IMR-90 (cell line): ENCODE measurements at regions of chr2 and their contacts with region 1.

Region 1: DNA sequence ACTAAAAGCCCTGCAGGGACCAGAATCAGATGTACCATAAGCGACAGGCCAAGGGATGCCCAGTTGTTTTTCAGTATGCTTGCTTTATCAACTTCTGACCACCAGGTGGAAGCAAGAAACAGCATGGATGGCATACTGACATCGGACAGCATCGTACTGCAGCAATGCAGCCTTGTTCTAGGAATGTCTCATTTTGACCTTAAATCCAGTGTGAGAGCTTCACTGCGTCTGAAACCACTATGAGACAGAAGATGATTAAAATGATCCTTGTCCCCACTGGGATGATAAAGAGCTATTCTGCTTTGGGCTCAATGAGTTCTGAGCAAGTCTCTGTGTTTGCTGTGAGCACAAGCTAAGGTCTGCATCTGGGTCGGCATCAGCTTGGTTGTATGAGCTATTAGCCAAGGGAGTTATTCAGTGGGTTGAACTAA is 54.3 kb downstream of the CDK15 start:
- DNase-seq: peak; percentile 93
- ATAC-seq: peak; percentile 83
- H3K4me3 ChIP-seq: no peak overlapping the region
- H3K27ac ChIP-seq: peak overlapping the region; percentile 68; the same call in 1 of the 2 replicates
- H3K4me1 ChIP-seq: peaks cover 26% of the 10 kb centered on the region
- H3K27me3 ChIP-seq: no peaks in the 10 kb centered on the region
- CTCF ChIP-seq: peak; percentile 80
- POLR2A ChIP-seq: 0 out of 2 replicates have a peak, but pooled peaks have one; percentile 43
- RAD21 ChIP-seq: peak; percentile 98

Region 2: DNA sequence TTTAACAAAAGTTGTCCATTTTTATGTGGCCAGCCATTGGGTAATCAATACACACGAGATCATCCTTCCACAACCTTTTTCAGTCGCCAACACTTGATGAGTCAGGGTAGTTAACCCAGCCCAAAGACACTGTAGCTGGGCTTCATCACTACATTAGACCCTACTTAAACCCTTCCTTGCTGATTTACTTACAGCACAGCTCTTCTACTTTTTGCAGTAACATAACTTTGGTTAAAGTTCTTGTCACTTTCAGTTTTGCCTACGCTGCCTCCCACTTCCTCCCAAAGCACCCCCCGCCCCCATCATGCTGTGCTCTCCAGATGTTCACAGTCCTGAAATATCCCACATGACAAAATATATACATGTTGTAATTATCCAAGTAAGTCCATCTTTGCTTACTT is 49.3 kb after region 1 on chr2:
- CTCF ChIA-PET with region 1: interaction called, 9 read pairs
- POLR2A ChIA-PET with region 1: interaction called, 3 read pairs
- dilution Hi-C with region 1: no loop called
- in situ Hi-C with region 1: no loop called
- intact Hi-C with region 1: loop called (anchors 2 kb)
- DNase-seq: peak; percentile 80
- ATAC-seq: peak; percentile 53
- H3K4me3 ChIP-seq: peak overlapping the region; percentile 42
- H3K27ac ChIP-seq: peak overlapping the region; percentile 76
- H3K4me1 ChIP-seq: peaks cover 11% of the 10 kb centered on the region
- H3K27me3 ChIP-seq: no peaks in the 10 kb centered on the region
- CTCF ChIP-seq: no peak
- POLR2A ChIP-seq: no peak
- RAD21 ChIP-seq: no peak

Region 3: GRCh38 chr2:202265467-202266277 is 405.0 kb after region 1 on chr2 and contains the start of gene NOP58:
- CTCF ChIA-PET with region 1: no interaction called
- POLR2A ChIA-PET with region 1: no interaction called
- dilution Hi-C with region 1: no loop called
- in situ Hi-C with region 1: no loop called
- intact Hi-C with region 1: loop called (anchors 5 kb)
- DNase-seq: peak; percentile 96
- ATAC-seq: peak; percentile 87
- H3K4me3 ChIP-seq: peak within 1 kb of the TSS; percentile 93
- H3K27ac ChIP-seq: peak within 1 kb of the TSS; percentile 89
- H3K4me1 ChIP-seq: peaks cover 2% of the 10 kb centered on the region
- H3K27me3 ChIP-seq: no peaks in the 10 kb centered on the region
- CTCF ChIP-seq: no peak
- POLR2A ChIP-seq: peak; percentile 98
- RAD21 ChIP-seq: no peak
- total RNA-seq, gene NOP58: 45.3 and 117 TPM in 2 replicates